ENCODE measurements at regions of chr17 and their contacts with region 1.

Region 1: GRCh38 chr17:6454957-6455705 is 10.9 kb downstream of the PIMREG start:
- DNase-seq: peak; percentile 13 to 76 (median 47)
- ATAC-seq: peak; percentile 91
- H3K4me3 ChIP-seq: peak overlapping the region; percentile 38
- H3K4me3 Mint-ChIP-seq: peak overlapping the region; percentile 76
- H3K27ac ChIP-seq: peak overlapping the region in 1 of 2 donors; percentile 41
- H3K27ac Mint-ChIP-seq: peak overlapping the region; percentile 65
- H3K4me1 ChIP-seq: peaks cover 10% of the 10 kb centered on the region
- H3K4me1 Mint-ChIP-seq: peaks cover 14% of the 10 kb centered on the region
- H3K27me3 ChIP-seq: no peaks in the 10 kb centered on the region
- H3K27me3 Mint-ChIP-seq: no peaks in the 10 kb centered on the region
- CTCF ChIP-seq: no peak

Region 2: GRCh38 chr17:6443692-6444569 is 11.2 kb before region 1 on chr17 and contains the start of gene PIMREG:
- CTCF ChIA-PET with region 1: no interaction called
- POLR2A ChIA-PET with region 1: interaction called, 13 read pairs
- intact Hi-C with region 1: no loop called
- DNase-seq: peak; percentile 83 to 93 (median 90)
- ATAC-seq: peak; percentile 98
- H3K4me3 ChIP-seq: peak within 1 kb of the TSS; percentile 80
- H3K4me3 Mint-ChIP-seq: peak within 1 kb of the TSS; percentile 91
- H3K27ac ChIP-seq: peak within 1 kb of the TSS in 1 of 2 donors; percentile 34
- H3K27ac Mint-ChIP-seq: peak within 1 kb of the TSS; percentile 39
- H3K4me1 ChIP-seq: peaks cover 17% of the 10 kb centered on the region
- H3K4me1 Mint-ChIP-seq: peaks cover 13% of the 10 kb centered on the region
- H3K27me3 ChIP-seq: peaks cover 0 to 8% of the 10 kb centered on the region in 2 experiments
- H3K27me3 Mint-ChIP-seq: peaks cover 18% of the 10 kb centered on the region
- CTCF ChIP-seq: no peak
- total RNA-seq, gene PIMREG: not detected

Measured in CD4-positive, alpha-beta T cell (primary cell).